K562 (cell line): ENCODE measurements at regions of chr2 and their contacts with region 1.

Region 1: DNA sequence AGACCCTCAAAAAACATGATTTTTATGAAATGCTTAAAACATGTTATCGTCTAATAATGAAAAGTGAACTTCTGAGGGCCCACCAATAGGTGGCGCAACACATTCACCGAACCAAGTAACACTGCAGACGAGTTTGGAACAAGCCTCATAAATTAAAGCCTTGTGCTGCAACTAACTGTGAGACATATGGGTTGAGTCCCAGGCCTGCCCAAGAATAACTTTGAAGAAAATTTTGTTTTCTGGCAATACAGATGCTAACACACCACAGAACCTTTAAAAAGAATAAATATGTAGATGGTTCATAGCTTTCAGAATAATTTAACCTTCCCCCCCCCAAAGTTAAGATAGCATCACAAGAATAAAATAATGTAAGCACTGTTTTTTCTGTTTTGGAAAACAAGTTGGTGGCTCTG is 285.8 kb downstream of the RNF144A start:
- DNase-seq: peak; percentile 35 to 65 (median 50)
- ATAC-seq: peak; percentile 77
- H3K4me3 ChIP-seq: no peak overlapping the region
- H3K27ac ChIP-seq: no peak overlapping the region
- H3K4me1 ChIP-seq: no peaks in the 10 kb centered on the region
- H3K27me3 ChIP-seq: peaks cover 0 to 22% of the 10 kb centered on the region in 2 experiments; a peak in 2 of 5 replicates
- CTCF ChIP-seq: peak; percentile 52 to 90 (median 81)
- EP300 ChIP-seq: no peak
- POLR2A ChIP-seq: no peak
- RAD21 ChIP-seq: peak; percentile 43 to 74

Region 2: DNA sequence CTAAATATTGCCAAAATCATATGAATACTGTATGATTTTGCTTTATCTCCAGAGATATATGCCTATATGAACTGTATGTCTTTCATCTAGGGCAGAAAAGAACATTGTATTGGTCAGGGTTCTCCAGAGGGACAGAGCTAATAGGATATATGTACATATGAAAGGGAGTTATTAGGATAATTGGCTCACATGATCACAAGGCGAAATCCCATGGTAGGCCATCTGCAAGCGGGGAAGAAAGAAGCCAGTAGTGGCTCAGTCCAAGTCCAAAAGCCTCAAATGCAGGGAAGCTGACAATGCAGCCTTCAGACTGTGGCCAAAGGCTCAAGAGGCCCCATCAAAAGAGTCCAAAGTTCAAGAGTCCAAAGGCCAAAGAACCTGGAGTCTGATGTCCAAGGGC is 75.9 kb before region 1 on chr2:
- CTCF ChIA-PET with region 1: no interaction called
- POLR2A ChIA-PET with region 1: no interaction called
- in situ Hi-C with region 1: no loop called
- intact Hi-C with region 1: no loop called
- DNase-seq: no peak
- ATAC-seq: no peak
- H3K4me3 ChIP-seq: no peak overlapping the region
- H3K27ac ChIP-seq: no peak overlapping the region
- H3K4me1 ChIP-seq: no peaks in the 10 kb centered on the region
- H3K27me3 ChIP-seq: no peaks in the 10 kb centered on the region
- CTCF ChIP-seq: no peak
- EP300 ChIP-seq: no peak
- POLR2A ChIP-seq: no peak
- RAD21 ChIP-seq: no peak

Region 3: DNA sequence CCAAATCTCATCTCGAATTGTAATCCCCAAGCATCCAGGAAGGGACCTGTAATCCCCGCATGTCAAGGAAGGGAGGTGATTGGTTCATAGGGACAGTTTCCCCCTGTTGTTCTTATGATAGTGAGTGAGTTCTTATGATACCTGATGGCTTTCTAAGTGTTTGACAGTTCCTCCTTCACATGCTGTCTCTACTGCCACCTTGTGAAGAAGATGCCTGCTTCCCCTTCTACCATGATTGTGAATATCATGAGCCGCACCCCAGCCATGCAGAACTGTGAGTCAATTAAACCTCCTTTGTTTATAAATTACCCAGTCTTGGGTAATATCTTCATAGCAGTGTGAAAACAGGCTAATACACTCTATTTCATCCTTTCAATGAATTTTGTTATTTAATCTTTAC is 160.8 kb after region 1 on chr2:
- CTCF ChIA-PET with region 1: no interaction called
- POLR2A ChIA-PET with region 1: no interaction called
- in situ Hi-C with region 1: no loop called
- intact Hi-C with region 1: loop called (anchors 10 kb)
- DNase-seq: peak in 1 of 4 experiments; percentile 3
- ATAC-seq: no peak
- H3K4me3 ChIP-seq: no peak overlapping the region
- H3K27ac ChIP-seq: no peak overlapping the region
- H3K4me1 ChIP-seq: no peaks in the 10 kb centered on the region
- H3K27me3 ChIP-seq: no peaks in the 10 kb centered on the region
- CTCF ChIP-seq: no peak
- EP300 ChIP-seq: no peak
- POLR2A ChIP-seq: no peak
- RAD21 ChIP-seq: no peak